ENCODE measurements at regions of chr9 and their contacts with region 1.

Region 1: DNA sequence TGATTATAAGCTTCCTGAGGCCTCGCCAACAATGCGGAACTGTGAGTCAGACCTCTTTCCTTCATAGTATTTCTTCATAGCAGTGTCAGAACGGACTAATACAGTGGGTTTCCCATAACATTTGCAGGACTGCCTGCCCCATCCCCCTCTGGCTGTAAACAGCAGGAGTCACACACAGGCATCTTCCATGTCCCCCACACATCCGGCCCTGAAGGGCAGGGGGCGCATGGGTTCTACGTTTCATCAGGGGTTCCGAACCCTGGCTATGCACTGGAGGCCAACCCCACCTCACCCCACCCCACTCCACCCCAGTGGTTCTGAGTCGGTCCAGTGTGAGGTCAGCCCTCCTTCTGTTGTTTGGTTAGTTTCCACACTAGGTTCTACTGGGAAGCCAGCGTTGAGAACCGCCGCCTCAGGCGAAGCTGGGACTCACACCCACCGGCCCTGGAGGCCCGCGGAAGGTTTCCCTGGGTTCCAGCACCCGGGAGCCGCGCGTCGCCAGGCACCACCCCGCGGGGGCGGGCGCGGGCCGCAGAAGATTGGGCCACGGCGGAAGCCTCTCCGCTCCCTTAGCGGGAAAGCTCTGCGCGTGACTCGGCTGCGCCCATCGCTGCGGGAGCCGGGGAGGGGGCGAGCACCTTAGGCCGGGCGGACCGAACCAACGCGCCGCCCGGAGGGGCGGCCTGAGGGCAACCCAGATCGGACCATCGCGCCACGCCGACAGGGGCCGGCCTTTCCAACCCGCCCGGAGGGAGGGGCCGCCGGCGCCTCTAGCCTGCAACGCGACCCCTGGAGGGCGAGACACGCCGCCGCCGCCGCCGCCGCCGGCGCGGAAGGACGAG is at the start of gene RUSC2:
- DNase-seq: peak; percentile 67 to 91
- H3K4me3 ChIP-seq: peak within 1 kb of the TSS; percentile 72 to 80
- H3K27ac ChIP-seq: peak within 1 kb of the TSS; percentile 98 to 99
- H3K4me1 ChIP-seq: no peaks in the 10 kb centered on the region
- H3K27me3 ChIP-seq: no peaks in the 10 kb centered on the region
- CTCF ChIP-seq: peak; percentile 39 to 60 (median 49)
- total RNA-seq, gene RUSC2: 116 TPM

Region 2: DNA sequence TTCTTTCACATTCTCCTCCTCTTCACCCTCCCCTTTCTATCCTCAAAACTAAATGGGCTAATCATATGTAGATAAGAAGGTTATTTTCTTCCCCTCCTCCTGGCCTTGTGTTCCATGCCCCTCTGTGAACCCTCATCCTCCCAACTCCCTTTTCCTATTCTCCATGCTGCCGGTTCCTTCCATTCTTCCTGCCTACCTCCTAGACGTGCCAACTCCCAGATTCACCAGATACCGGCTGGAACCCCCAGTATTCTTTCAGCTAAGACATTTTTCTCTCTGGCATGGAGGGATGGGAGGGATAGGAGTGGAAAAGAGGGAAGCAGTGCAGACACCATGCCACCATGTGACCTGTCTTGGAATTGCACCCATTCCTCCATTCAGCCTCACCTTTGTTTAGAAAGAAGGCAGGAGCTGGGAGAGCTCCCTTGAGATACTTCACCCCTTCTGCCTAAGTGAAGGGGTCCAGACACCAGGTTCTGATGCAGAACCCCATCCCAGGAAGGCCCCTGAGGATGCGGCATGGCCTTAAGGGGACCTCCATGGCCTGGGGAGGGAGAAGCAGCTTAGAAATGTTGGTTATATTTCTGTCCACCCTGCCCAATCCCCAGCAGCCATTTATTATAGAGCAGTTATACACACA is 495.2 kb before region 1 on chr9:
- intact Hi-C with region 1: loop called (anchors 2 kb)
- DNase-seq: peak in 1 of 2 donors; percentile 72
- H3K4me3 ChIP-seq: peak overlapping the region; percentile 24 to 57
- H3K27ac ChIP-seq: peak overlapping the region; percentile 98 to 100
- H3K4me1 ChIP-seq: peaks cover 19 to 48% of the 10 kb centered on the region in 2 donors
- H3K27me3 ChIP-seq: no peaks in the 10 kb centered on the region
- CTCF ChIP-seq: peak; percentile 49 to 59 (median 54)

Region 3: GRCh38 chr9:35111001-35111933 is 378.3 kb before region 1 on chr9:
- intact Hi-C with region 1: no loop called
- DNase-seq: peak; percentile 95 to 99
- H3K4me3 ChIP-seq: peak overlapping the region; percentile 87 to 92
- H3K27ac ChIP-seq: peak overlapping the region; percentile 98 to 99
- H3K4me1 ChIP-seq: peaks cover 16 to 39% of the 10 kb centered on the region in 2 donors
- H3K27me3 ChIP-seq: no peaks in the 10 kb centered on the region
- CTCF ChIP-seq: no peak

Region 4: GRCh38 chr9:35518226-35518821 is 28.8 kb after region 1 on chr9:
- intact Hi-C with region 1: loop called (anchors 2 kb)
- DNase-seq: peak in 1 of 2 donors; percentile 83
- H3K4me3 ChIP-seq: no peak overlapping the region
- H3K27ac ChIP-seq: peak overlapping the region; percentile 94 to 95
- H3K4me1 ChIP-seq: peaks cover 31 to 88% of the 10 kb centered on the region in 2 donors
- H3K27me3 ChIP-seq: no peaks in the 10 kb centered on the region
- CTCF ChIP-seq: no peak

Region 5: DNA sequence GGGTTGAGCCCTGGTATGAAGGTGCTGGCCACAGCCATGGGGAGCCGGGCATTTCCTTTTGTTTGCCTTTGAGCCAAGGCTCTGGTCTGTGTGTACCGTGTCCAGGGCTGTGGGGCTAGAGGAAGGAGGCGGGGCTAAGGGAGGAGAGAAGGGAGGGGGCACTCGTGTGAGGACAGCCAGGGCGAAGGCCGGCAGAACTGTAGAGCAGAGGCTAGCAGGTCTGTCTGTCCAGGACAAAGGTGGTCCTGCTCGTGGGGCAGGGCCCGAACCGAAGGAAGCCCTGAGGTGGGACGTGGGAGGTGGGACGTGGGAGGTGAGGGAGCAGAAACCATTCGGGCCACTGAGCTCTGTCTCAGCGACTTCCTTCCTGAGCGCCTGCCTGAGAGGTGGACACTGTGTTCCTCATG is 74.3 kb after region 1 on chr9:
- intact Hi-C with region 1: loop called (anchors 1 kb)
- DNase-seq: peak in 1 of 2 donors; percentile 85
- H3K4me3 ChIP-seq: peak overlapping the region; percentile 17 to 19
- H3K27ac ChIP-seq: peak overlapping the region; percentile 83 to 94
- H3K4me1 ChIP-seq: peaks cover 23 to 52% of the 10 kb centered on the region in 2 donors
- H3K27me3 ChIP-seq: no peaks in the 10 kb centered on the region
- CTCF ChIP-seq: no peak

Region 6: GRCh38 chr9:35646533-35647265 is 157.2 kb after region 1 on chr9:
- intact Hi-C with region 1: loop called (anchors 5 kb)
- DNase-seq: peak; percentile 66 to 96
- H3K4me3 ChIP-seq: peak overlapping the region; percentile 66 to 68
- H3K27ac ChIP-seq: peak overlapping the region; percentile 94 to 95
- H3K4me1 ChIP-seq: peaks cover 15 to 37% of the 10 kb centered on the region in 2 donors
- H3K27me3 ChIP-seq: no peaks in the 10 kb centered on the region
- CTCF ChIP-seq: peak; percentile 97 to 99 (median 97)

Region 7: DNA sequence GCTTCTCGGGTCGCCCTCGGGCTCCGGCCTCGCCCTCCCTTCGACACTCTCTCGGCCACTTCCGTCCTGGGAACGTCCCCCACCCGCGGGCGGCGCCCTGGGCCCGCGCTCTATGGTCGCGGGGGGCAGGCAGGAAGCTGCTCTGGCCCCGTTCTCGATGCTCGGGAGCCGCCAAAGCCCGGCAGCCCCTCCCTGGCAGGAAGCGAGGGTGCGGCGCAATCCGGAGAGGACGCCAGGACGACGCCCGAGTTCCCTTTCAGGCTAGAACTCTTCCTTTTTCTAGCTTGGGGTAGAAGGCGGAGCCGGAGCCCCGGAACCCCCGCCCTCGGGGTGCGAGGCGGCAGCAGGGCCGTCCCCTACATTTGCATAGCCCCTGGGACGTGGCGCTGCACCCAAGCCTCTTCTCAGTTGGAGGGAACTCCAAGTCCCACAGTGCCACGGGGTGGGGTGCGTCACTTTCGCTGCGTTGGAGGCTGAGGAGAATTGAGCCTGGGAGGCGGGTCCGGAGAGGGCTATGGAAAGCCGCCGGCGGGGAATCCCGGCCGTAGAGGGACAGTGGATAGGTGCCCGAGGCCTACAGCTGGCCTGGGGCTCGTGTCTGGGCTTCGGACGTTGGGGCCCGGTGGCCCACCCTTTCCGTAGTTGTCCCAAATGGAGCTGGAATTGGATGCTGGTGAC is 242.7 kb after region 1 on chr9 and contains the starts of genes CREB3 and TLN1:
- intact Hi-C with region 1: loop called (anchors 10 kb)
- DNase-seq: peak; percentile 98 to 100
- H3K4me3 ChIP-seq: peak within 1 kb of the TSS; percentile 74 to 81
- H3K27ac ChIP-seq: peak within 1 kb of the TSS; percentile 98 to 99
- H3K4me1 ChIP-seq: peaks cover 18 to 28% of the 10 kb centered on the region in 2 donors
- H3K27me3 ChIP-seq: no peaks in the 10 kb centered on the region
- CTCF ChIP-seq: no peak
- total RNA-seq, gene CREB3: 48.3 TPM
- total RNA-seq, gene TLN1: 735 TPM

Region 8: DNA sequence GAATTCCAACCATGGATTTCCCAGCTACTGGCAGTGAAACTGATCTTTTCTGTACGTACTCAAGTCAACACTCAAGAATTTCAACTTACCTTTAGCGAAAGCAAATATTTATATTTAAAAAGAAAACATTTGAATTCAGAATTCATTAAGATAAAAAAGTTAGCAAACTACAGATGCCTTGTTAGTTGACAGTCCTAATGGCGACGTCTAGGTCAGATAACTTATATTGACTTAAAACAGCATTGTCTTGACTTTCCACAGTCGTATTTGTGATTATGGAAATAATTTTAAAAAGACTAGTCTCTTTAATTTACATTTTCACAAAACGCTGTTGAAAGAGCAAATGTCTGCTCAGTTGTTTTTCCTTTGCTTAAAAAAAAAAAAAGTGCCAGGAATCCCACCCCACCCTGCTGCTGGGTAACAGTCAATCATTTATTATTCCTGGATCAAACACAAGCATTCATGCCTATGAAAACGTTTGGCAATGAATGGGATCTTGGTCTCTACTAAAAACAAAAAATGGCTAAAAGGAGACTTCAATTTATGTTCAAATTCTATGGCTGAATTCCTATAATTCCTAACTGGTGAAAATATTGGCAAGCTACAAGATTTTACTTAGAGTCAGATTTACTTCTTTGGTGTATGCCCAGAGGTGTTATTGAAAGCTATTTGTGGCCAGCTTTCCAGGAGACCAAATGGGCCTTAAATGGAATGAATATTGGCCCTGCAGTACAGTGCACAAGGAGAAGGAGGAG is 446.4 kb after region 1 on chr9:
- intact Hi-C with region 1: loop called (anchors 10 kb)
- DNase-seq: no peak
- H3K4me3 ChIP-seq: no peak overlapping the region
- H3K27ac ChIP-seq: peak overlapping the region; percentile 69 to 87
- H3K4me1 ChIP-seq: peaks cover 6 to 46% of the 10 kb centered on the region in 2 donors
- H3K27me3 ChIP-seq: no peaks in the 10 kb centered on the region
- CTCF ChIP-seq: no peak